ENCODE measurements at regions of chr11 and their contacts with region 1.

Region 1: DNA sequence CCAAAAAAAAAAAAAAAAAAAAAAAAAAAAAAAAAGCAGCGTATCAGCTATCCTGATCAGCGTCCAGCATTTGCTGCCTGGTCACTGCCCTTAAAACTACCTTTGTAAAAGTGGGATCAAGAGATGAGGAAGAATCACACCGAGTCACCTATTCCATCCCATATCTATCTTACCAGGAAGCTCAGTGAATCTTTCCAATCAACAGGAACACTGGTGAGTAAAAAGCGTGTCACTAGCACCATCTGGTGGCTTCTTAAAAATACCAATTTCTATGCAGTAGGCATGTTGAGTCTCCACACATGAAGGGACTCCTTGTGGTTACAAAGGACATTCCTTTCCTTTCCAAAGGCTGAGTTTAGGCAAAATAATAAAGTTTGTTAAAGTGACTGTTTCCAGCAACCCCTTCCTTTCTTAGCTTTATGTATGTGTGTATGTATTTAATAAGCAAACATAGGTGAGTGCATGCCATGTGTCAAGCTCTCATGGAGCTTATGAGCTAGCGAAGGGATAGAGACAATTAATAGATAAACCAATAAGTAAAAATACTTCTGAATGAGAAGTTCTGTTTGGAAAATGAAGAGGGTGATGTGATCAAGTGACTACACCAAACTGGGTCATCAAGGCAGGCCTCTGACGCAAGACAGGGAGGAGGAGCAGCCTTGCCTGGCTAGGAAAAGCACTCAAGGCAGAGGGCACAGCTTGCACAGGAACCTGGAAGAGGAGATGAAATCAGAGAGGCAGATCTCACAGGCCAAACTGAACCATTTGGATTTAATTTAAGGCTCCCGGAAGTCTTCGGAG is 13.9 kb upstream of the TP53AIP1 start:
- DNase-seq: peak; percentile 26
- H3K4me3 ChIP-seq: no peak overlapping the region
- CTCF ChIP-seq: peak; percentile 57

Region 2: DNA sequence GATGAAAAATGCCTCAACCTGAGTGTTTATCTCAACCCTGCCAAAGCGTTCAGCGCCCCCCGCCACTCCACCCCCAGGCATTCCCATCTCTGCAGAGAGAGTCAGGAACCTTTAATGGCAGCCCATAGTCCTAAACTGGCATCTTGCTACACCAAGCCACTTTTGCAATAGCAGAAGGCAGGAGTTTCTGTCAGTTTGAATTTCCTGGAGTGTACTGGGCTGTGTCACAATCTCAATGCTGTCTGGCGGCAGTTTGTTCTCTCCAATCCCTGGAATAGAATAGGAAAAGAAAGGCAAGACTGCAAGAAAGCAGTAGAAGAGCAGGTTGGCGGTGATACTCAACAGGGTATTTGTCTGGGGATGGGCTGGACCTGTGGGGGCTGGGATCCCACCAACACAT is 295.7 kb before region 1 on chr11:
- CTCF ChIA-PET with region 1: no interaction called
- POLR2A ChIA-PET with region 1: no interaction called
- DNase-seq: no peak
- H3K4me3 ChIP-seq: no peak overlapping the region
- CTCF ChIP-seq: no peak

Region 3: GRCh38 chr11:128879817-128880216 is 76.8 kb before region 1 on chr11:
- CTCF ChIA-PET with region 1: interaction called, 488 read pairs
- POLR2A ChIA-PET with region 1: no interaction called
- DNase-seq: no peak
- H3K4me3 ChIP-seq: no peak overlapping the region
- CTCF ChIP-seq: no peak

Region 4: DNA sequence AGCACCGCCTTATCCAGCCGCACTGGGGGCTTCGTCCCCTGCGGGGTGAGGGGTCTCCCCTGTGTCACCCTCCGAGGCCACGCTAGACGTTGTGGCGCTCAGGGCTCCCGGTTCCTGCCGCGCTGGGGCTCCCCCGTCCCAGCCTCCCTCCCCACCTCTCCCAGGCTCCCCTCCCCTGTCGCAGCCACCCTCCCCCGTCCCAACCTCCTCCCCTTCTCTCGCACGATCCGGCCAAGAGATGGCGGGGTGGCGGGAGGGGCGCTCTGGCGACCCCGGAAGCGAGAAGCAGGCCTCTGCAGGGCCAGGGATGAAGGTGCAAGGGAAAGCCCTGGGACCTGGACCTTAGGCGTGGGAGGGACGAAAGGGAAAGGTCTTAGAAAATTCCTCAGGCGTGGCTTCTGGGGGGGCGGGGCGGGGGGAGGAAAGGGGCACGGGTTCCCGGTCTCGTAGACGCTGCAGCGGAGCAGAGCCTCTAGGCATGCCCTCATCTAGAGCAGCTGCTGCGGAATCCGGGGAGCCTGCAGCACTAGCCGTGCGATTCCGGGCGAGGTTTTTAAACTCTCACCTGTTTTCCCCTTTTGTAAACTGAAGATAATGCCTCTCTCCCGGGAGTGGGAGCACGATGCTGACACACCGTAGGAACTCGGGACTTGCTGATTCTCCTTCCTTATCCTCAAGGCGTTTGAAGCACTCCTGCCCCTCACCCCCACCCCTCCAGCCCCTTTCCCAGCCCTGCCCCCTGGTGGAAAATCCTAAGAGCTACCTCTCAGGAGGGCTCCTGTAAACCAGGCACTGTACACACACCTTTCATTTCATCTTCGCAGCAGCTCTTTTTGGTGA is 51.0 kb before region 1 on chr11:
- CTCF ChIA-PET with region 1: interaction called, 19 read pairs
- POLR2A ChIA-PET with region 1: no interaction called
- DNase-seq: no peak
- H3K4me3 ChIP-seq: peak overlapping the region; percentile 60
- CTCF ChIP-seq: peak; percentile 29

Region 5: GRCh38 chr11:128928400-128928799 is 28.2 kb before region 1 on chr11:
- CTCF ChIA-PET with region 1: interaction called, 13 read pairs
- POLR2A ChIA-PET with region 1: no interaction called
- DNase-seq: no peak
- H3K4me3 ChIP-seq: no peak overlapping the region
- CTCF ChIP-seq: no peak

Region 6: DNA sequence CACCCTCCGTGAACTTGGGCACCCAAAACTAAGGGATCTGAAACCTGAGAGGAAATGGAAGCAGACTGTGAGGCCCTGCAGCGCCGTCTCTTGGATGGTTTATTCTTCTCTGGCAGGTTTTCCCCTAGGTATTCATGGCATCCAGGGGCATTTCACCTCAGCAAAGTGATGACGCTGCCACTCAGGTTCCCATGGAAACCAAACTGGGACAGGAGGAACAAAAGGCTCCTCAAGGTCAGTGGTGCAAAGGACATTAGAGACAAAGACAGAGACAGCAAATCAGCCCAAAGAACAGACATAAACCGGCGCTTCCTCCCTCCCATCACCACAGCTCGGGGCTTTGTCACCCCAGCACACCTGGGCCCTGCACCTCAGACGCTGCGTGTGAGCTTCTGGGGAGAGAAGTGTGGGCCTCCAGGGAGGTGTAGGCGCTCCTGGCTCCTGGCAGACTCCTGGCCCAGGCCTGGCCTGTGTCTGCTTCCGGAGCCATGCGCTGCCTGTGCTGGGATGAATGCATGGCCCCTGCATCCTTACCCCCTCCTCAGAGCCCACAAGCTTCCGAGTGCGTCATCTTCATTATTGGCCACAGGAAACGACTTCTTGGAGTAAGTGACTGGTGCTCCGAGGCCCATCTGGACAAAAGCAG is 19.9 kb before region 1 on chr11:
- CTCF ChIA-PET with region 1: interaction called, 89 read pairs
- POLR2A ChIA-PET with region 1: no interaction called
- DNase-seq: no peak
- H3K4me3 ChIP-seq: no peak overlapping the region
- CTCF ChIP-seq: no peak

Region 7: GRCh38 chr11:128988242-128988970 is 31.8 kb after region 1 on chr11:
- CTCF ChIA-PET with region 1: interaction called, 11 read pairs
- POLR2A ChIA-PET with region 1: no interaction called
- DNase-seq: no peak
- H3K4me3 ChIP-seq: no peak overlapping the region
- CTCF ChIP-seq: no peak